ENCODE measurements at regions of chr5 and their contacts with region 1.

Region 1: DNA sequence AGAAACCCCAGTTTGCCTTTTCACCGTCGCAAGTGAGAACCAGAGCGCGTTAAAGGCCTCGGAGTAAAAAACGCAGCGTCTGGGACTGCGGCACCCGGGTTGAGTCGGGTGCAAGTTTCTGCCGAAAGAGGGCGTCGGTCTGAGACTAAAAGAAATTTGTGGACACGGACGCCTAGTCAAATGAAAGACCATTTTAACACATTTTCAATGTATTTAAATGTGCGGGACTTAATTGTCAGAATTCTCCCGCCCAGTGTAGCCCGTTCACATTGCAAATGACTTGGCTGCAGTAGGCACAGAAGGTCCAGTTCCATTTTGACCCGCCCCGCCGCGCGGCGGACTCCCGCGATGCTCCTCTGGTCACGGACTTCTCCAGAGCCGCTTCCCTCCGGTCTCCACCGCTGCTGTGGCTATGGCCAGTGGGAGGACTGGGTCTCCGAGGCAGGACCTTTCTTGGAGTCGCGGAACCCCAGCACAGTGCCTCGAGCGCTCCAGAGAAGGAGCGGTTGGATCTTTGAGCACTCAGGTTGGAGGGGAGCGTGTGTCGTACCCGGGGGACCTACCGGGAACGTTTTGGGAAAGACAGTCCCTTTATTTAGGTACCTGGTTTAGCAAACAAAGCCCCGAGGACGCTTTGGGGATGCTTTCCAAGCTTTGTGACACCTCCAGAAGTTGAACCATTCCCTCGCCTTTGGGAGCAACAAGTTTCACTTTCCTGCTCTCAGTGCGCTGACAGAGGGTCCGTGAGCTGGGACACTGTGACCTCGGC is 1.2 kb upstream of the NPR3 start:
- DNase-seq: peak; percentile 58 to 78 (median 71)
- ATAC-seq: peak; percentile 51 to 58 (median 56)
- H3K4me3 ChIP-seq: peak overlapping the region; percentile 52 to 80 (median 62)
- H3K27ac ChIP-seq: peak overlapping the region; percentile 58 to 97 (median 85)
- H3K4me1 ChIP-seq: peaks cover 0 to 48% (median 18%) of the 10 kb centered on the region in 12 donors
- H3K27me3 ChIP-seq: peaks cover 0 to 62% (median 0%) of the 10 kb centered on the region in 9 donors
- CTCF ChIP-seq: peak; percentile 40 to 84 (median 64)
- POLR2A ChIP-seq: peak in 1 of 2 donors; percentile 14

Region 2: GRCh38 chr5:32842813-32843530 is 133.0 kb after region 1 on chr5:
- intact Hi-C with region 1: loop called in 2 of 10 experiments (anchors 10 kb)
- DNase-seq: no peak
- ATAC-seq: peak in 3 of 4 donors; percentile 42 to 64 (median 52)
- H3K4me3 ChIP-seq: no peak overlapping the region
- H3K27ac ChIP-seq: no peak overlapping the region
- H3K4me1 ChIP-seq: peaks cover 0 to 8% (median 0%) of the 10 kb centered on the region in 12 donors
- H3K27me3 ChIP-seq: no peaks in the 10 kb centered on the region
- CTCF ChIP-seq: no peak
- POLR2A ChIP-seq: no peak

Region 3: GRCh38 chr5:32916648-32917047 is 206.7 kb after region 1 on chr5:
- intact Hi-C with region 1: loop called in 2 of 10 experiments (anchors 5 to 10 kb)
- DNase-seq: peak in 1 of 5 donors; percentile 27
- ATAC-seq: peak in 2 of 4 donors; percentile 60 to 68
- H3K4me3 ChIP-seq: no peak overlapping the region
- H3K27ac ChIP-seq: no peak overlapping the region
- H3K4me1 ChIP-seq: peaks cover 0 to 3% (median 0%) of the 10 kb centered on the region in 12 donors
- H3K27me3 ChIP-seq: no peaks in the 10 kb centered on the region
- CTCF ChIP-seq: peak in 9 of 12 donors; percentile 8 to 51 (median 36)
- POLR2A ChIP-seq: no peak

Region 4: DNA sequence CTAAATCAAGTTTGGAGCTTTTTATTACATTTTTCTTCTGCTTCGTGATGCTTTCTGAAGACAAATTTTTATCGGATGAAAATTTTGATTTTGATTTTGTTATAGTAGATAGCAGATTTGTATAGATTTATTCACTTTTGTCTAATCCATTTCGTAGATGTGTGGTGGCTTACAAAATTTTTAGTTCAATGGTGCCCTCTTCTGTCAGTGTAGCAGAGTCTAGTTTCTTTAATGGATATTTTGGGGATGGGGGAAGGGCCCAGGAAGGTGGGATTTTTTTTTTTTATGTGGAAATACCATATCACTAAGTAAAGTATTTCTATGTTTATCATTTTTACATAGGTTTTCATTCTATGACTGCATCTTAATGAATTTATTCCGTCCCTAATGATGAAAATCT is 470.9 kb after region 1 on chr5:
- intact Hi-C with region 1: loop called in 9 of 10 experiments (anchors 2 to 10 kb)
- DNase-seq: no peak
- ATAC-seq: peak in 2 of 4 donors; percentile 50 to 60
- H3K4me3 ChIP-seq: no peak overlapping the region
- H3K27ac ChIP-seq: no peak overlapping the region
- H3K4me1 ChIP-seq: peaks cover 0 to 6% (median 0%) of the 10 kb centered on the region in 12 donors
- H3K27me3 ChIP-seq: no peaks in the 10 kb centered on the region
- CTCF ChIP-seq: peak in 10 of 12 donors; percentile 14 to 64 (median 39)
- POLR2A ChIP-seq: no peak

Region 5: GRCh38 chr5:33379757-33380156 is 669.8 kb after region 1 on chr5:
- intact Hi-C with region 1: loop called in 3 of 10 experiments (anchors 10 kb)
- DNase-seq: no peak
- ATAC-seq: peak in 3 of 4 donors; percentile 17 to 75 (median 59)
- H3K4me3 ChIP-seq: no peak overlapping the region
- H3K27ac ChIP-seq: no peak overlapping the region
- H3K4me1 ChIP-seq: peaks cover 0 to 4% (median 0%) of the 10 kb centered on the region in 12 donors
- H3K27me3 ChIP-seq: no peaks in the 10 kb centered on the region
- CTCF ChIP-seq: peak; percentile 28 to 63 (median 48)
- POLR2A ChIP-seq: no peak

Region 6: GRCh38 chr5:33423018-33423630 is 713.2 kb after region 1 on chr5:
- intact Hi-C with region 1: loop called in 5 of 10 experiments (anchors 5 to 10 kb)
- DNase-seq: no peak
- ATAC-seq: peak in 1 of 4 donors; percentile 26
- H3K4me3 ChIP-seq: no peak overlapping the region
- H3K27ac ChIP-seq: no peak overlapping the region
- H3K4me1 ChIP-seq: peaks cover 0 to 12% (median 3%) of the 10 kb centered on the region in 12 donors
- H3K27me3 ChIP-seq: no peaks in the 10 kb centered on the region
- CTCF ChIP-seq: peak; percentile 16 to 61 (median 48)
- POLR2A ChIP-seq: no peak

Measured in heart left ventricle (tissue), 16 donors.